CD4-positive, alpha-beta memory T cell (primary cell): ENCODE measurements at regions of chr13 and their contacts with region 1.

Region 1: DNA sequence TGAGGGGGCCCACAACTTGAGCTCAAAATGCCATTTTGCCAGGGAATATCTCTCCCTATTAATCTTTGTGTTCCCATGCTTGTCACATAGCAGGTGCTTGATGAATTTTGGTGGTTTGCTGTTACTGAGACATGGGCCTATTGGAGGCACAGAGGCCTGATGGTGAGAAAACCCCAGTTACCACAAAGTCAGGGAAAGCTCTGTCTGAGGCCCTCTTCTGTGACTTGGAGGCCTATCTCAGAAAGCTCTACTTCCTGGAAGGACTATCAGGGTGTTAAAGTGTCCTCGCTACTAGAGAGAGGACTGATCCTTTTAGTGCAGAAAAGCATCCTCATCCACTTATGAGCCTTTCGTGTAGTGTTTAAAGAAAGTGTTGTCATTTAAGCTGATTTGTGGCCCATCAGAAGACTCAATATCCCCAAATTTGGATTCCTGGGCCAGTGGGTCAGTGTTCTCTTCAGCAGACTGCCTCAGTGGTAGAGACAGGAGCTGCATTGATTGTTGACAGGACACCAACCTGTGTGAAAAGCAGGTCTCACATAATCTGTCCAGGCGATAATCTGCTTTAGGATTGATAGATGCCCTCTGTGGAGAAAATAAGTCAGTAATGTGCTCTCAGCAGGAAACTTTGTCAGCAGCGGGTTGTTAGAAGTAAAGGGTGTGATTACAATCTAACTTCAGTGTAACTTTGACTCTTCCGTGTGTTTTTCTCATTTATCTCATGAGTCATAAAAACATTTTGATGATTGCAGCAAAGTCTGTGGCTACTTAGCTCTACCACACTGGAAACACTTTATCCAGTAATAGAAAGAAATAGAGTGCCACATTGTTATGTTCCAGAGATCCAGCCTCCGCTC is 121.0 kb downstream of the AKAP11 start:
- DNase-seq: peak; percentile 31 to 64 (median 48)
- H3K4me3 ChIP-seq: peak overlapping the region in 1 of 2 donors; percentile 3
- H3K4me3 Mint-ChIP-seq: peak overlapping the region; percentile 17 to 90 (median 68)
- H3K27ac ChIP-seq: peak overlapping the region; percentile 55
- H3K27ac Mint-ChIP-seq: peak overlapping the region; percentile 85 to 99 (median 94)
- H3K4me1 ChIP-seq: peaks cover 73% of the 10 kb centered on the region
- H3K4me1 Mint-ChIP-seq: peaks cover 68 to 88% (median 78%) of the 10 kb centered on the region in 4 donors
- H3K27me3 ChIP-seq: no peaks in the 10 kb centered on the region
- H3K27me3 Mint-ChIP-seq: no peaks in the 10 kb centered on the region

Region 2: GRCh38 chr13:42102961-42103865 is 289.7 kb before region 1 on chr13:
- CTCF ChIA-PET with region 1: no interaction called
- POLR2A ChIA-PET with region 1: no interaction called
- intact Hi-C with region 1: no loop called
- DNase-seq: no peak
- H3K4me3 ChIP-seq: no peak overlapping the region
- H3K4me3 Mint-ChIP-seq: no peak overlapping the region
- H3K27ac ChIP-seq: no peak overlapping the region
- H3K27ac Mint-ChIP-seq: peak overlapping the region in 1 of 7 donors; percentile 56
- H3K4me1 ChIP-seq: no peaks in the 10 kb centered on the region
- H3K4me1 Mint-ChIP-seq: peaks cover 0 to 16% (median 11%) of the 10 kb centered on the region in 4 donors
- H3K27me3 ChIP-seq: no peaks in the 10 kb centered on the region
- H3K27me3 Mint-ChIP-seq: no peaks in the 10 kb centered on the region

Region 3: GRCh38 chr13:42271337-42272114 is 121.4 kb before region 1 on chr13:
- CTCF ChIA-PET with region 1: no interaction called
- POLR2A ChIA-PET with region 1: interaction called, 19 read pairs
- intact Hi-C with region 1: loop called (anchors 5 kb)
- DNase-seq: peak; percentile 95 to 98 (median 96)
- H3K4me3 ChIP-seq: peak overlapping the region; percentile 82 to 93
- H3K4me3 Mint-ChIP-seq: peak overlapping the region; percentile 88 to 99 (median 97)
- H3K27ac ChIP-seq: peak overlapping the region; percentile 94
- H3K27ac Mint-ChIP-seq: peak overlapping the region; percentile 98 to 99 (median 98)
- H3K4me1 ChIP-seq: peaks cover 46% of the 10 kb centered on the region
- H3K4me1 Mint-ChIP-seq: peaks cover 35 to 60% (median 47%) of the 10 kb centered on the region in 4 donors
- H3K27me3 ChIP-seq: no peaks in the 10 kb centered on the region
- H3K27me3 Mint-ChIP-seq: no peaks in the 10 kb centered on the region

Region 4: GRCh38 chr13:42369071-42369797 is 23.7 kb before region 1 on chr13:
- CTCF ChIA-PET with region 1: interaction called, 4 read pairs
- POLR2A ChIA-PET with region 1: interaction called, 12 read pairs
- intact Hi-C with region 1: no loop called
- DNase-seq: no peak
- H3K4me3 ChIP-seq: no peak overlapping the region
- H3K4me3 Mint-ChIP-seq: peak overlapping the region in 4 of 8 donors; percentile 2 to 20 (median 4)
- H3K27ac ChIP-seq: no peak overlapping the region
- H3K27ac Mint-ChIP-seq: peak overlapping the region in 6 of 7 donors; percentile 2 to 43 (median 26)
- H3K4me1 ChIP-seq: peaks cover 23% of the 10 kb centered on the region
- H3K4me1 Mint-ChIP-seq: peaks cover 16 to 27% (median 19%) of the 10 kb centered on the region in 4 donors
- H3K27me3 ChIP-seq: no peaks in the 10 kb centered on the region
- H3K27me3 Mint-ChIP-seq: no peaks in the 10 kb centered on the region

Region 5: DNA sequence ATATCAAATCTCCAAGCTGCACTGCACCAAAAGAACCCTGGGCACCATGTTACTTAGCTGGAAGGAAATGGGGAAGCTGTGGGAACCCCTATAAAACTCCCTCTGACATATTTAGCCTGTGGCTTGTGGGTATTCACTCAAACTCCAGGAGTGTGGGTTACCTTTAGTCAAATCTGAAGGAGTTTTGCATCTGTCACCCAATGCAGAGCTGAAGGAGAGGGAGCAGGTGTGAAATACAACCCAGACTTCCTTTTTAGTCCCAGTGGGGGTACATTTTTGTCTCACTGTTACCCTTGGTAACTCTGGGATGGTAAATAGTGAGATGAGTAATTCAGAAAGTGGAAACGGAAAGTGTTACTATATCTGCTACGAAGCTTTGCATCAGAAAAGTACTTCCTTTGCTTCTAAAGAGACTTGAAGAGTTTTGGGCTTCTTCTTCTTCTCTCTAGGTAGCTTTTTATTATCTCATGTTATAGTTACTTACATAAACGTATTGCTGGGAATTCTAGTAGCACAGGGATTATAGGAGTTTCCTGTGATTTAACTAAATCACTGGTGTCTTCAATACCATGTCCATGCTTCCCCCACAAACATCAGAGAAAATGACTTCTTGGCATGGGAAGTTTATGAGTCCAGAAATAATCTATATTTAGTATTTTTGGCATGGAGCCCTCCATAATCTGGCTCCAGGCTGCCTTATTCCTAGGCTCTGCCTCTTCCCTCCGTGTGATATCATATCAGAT is 15.1 kb before region 1 on chr13:
- CTCF ChIA-PET with region 1: interaction called, 17 read pairs
- POLR2A ChIA-PET with region 1: interaction called, 27 read pairs
- intact Hi-C with region 1: loop called (anchors 1 kb)
- DNase-seq: peak in 4 of 5 donors; percentile 22 to 65 (median 36)
- H3K4me3 ChIP-seq: no peak overlapping the region
- H3K4me3 Mint-ChIP-seq: peak overlapping the region in 5 of 8 donors; percentile 20 to 60 (median 35)
- H3K27ac ChIP-seq: peak overlapping the region; percentile 17
- H3K27ac Mint-ChIP-seq: peak overlapping the region; percentile 66 to 88 (median 77)
- H3K4me1 ChIP-seq: peaks cover 27% of the 10 kb centered on the region
- H3K4me1 Mint-ChIP-seq: peaks cover 17 to 38% (median 25%) of the 10 kb centered on the region in 4 donors
- H3K27me3 ChIP-seq: no peaks in the 10 kb centered on the region
- H3K27me3 Mint-ChIP-seq: no peaks in the 10 kb centered on the region

Region 6: GRCh38 chr13:42405665-42406390 is 12.9 kb after region 1 on chr13:
- CTCF ChIA-PET with region 1: interaction called, 8 read pairs
- POLR2A ChIA-PET with region 1: interaction called, 40 read pairs
- intact Hi-C with region 1: loop called (anchors 1 kb)
- DNase-seq: peak in 2 of 5 donors; percentile 17 to 82
- H3K4me3 ChIP-seq: peak overlapping the region in 1 of 2 donors; percentile 17
- H3K4me3 Mint-ChIP-seq: peak overlapping the region in 7 of 8 donors; percentile 45 to 83 (median 70)
- H3K27ac ChIP-seq: peak overlapping the region; percentile 44
- H3K27ac Mint-ChIP-seq: peak overlapping the region; percentile 50 to 92 (median 80)
- H3K4me1 ChIP-seq: peaks cover 20% of the 10 kb centered on the region
- H3K4me1 Mint-ChIP-seq: peaks cover 19 to 39% (median 25%) of the 10 kb centered on the region in 4 donors
- H3K27me3 ChIP-seq: no peaks in the 10 kb centered on the region
- H3K27me3 Mint-ChIP-seq: no peaks in the 10 kb centered on the region

Region 7: DNA sequence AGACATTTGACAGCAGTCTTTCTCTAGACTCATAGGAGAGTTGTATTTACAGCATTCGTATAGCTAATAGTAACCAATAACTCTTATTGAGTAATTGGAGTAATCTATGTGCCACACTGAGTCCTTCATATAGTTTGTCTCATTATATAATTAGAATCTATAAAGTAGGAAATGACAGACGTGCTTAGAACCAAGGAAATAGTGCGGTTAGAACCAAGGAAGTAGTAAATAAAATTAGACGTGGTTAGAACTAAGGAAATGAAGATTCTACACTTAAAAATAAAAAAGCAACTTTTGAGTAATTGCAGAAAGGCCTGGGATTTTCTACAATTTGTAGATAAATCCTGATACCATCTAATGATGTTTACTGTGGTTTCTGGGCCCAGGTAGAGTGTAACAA is 73.2 kb after region 1 on chr13:
- CTCF ChIA-PET with region 1: interaction called, 4 read pairs
- POLR2A ChIA-PET with region 1: interaction called, 4 read pairs
- intact Hi-C with region 1: loop called (anchors 10 kb)
- DNase-seq: peak in 4 of 5 donors; percentile 11 to 19 (median 14)
- H3K4me3 ChIP-seq: no peak overlapping the region
- H3K4me3 Mint-ChIP-seq: peak overlapping the region in 6 of 8 donors; percentile 41 to 72 (median 60)
- H3K27ac ChIP-seq: no peak overlapping the region
- H3K27ac Mint-ChIP-seq: peak overlapping the region; percentile 12 to 80 (median 64)
- H3K4me1 ChIP-seq: peaks cover 26% of the 10 kb centered on the region
- H3K4me1 Mint-ChIP-seq: peaks cover 17 to 37% (median 30%) of the 10 kb centered on the region in 4 donors
- H3K27me3 ChIP-seq: no peaks in the 10 kb centered on the region
- H3K27me3 Mint-ChIP-seq: no peaks in the 10 kb centered on the region

Region 8: GRCh38 chr13:42478531-42479156 is 85.7 kb after region 1 on chr13:
- CTCF ChIA-PET with region 1: interaction called, 14 read pairs
- POLR2A ChIA-PET with region 1: interaction called, 3 read pairs
- intact Hi-C with region 1: no loop called
- DNase-seq: peak in 2 of 5 donors; percentile 5 to 11
- H3K4me3 ChIP-seq: no peak overlapping the region
- H3K4me3 Mint-ChIP-seq: no peak overlapping the region
- H3K27ac ChIP-seq: no peak overlapping the region
- H3K27ac Mint-ChIP-seq: peak overlapping the region in 1 of 7 donors; percentile 20
- H3K4me1 ChIP-seq: no peaks in the 10 kb centered on the region
- H3K4me1 Mint-ChIP-seq: peaks cover 0 to 6% (median 3%) of the 10 kb centered on the region in 4 donors
- H3K27me3 ChIP-seq: no peaks in the 10 kb centered on the region
- H3K27me3 Mint-ChIP-seq: no peaks in the 10 kb centered on the region